Aorta (tissue), 5 donors: ENCODE measurements at regions of chr10 and their contacts with region 1.

Region 1: DNA sequence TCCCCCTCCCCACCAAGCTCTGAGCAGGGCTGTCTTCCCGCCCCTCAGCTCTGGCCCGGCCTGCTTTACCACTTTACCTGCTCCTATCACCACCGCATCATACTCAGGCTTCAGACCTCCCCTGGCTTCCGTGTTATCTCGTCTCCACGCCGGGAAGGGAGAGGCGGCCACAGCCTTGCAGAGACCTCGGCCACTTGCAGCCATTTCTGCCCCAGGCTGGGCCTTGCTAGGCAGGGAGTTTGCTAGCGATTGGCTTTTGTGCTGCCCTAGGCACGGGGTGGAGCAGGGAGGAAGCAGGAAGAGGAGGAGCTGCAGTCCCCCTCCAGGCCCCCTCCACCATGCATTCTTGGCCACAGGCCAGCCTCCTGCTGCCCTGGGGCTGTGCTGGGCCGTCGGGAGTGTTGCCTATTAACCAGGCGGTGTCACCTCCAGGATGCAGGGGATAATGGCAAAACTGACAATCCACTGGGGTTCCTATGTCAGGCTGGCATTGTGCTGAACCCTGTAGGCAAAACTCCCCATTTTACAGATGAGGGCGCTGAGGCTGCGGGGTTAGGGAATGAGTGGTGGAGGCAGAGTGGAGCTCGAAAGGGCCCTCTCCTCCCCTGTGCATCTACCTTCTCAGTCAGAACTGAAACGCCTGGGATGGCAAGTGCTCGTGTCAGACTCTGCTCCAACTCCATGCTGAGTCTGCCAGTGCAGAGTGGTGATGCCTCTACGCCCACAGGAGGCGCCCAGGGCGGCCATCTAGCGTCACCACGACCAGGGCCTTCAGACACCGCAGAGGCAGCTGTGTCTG is at the start of gene PYROXD2:
- DNase-seq: peak; percentile 96
- ATAC-seq: peak; percentile 95
- H3K4me3 ChIP-seq: peak within 1 kb of the TSS; percentile 14 to 56
- H3K27ac ChIP-seq: peak within 1 kb of the TSS in 1 of 2 donors; percentile 22
- H3K4me1 ChIP-seq: no peaks in the 10 kb centered on the region
- H3K27me3 ChIP-seq: no peaks in the 10 kb centered on the region
- total RNA-seq, gene PYROXD2: 8.7 to 17.7 TPM

Region 2: DNA sequence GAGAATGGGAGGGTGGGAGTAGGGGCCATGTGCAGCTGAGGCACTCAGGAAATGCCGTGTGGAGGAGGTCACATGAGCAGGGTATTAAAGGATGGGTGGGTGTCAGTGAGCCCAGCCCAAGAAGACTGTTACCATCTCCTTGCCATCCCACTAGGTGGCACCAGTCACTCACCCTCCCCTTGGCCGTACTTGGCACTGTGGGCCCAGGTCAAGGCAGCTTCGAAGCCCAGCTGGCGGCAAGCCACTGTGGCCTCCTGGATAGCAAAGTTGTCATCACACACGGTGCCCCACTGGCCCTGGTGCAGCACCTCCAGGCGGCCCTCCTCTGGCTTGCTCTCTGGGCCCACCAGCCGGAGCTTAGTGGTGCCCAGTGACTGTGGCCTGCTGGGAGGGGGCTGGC is 152.6 kb before region 1 on chr10:
- intact Hi-C with region 1: loop called in 1 of 2 experiments (anchors 10 kb)
- DNase-seq: no peak
- ATAC-seq: no peak
- H3K4me3 ChIP-seq: no peak overlapping the region
- H3K27ac ChIP-seq: no peak overlapping the region
- H3K4me1 ChIP-seq: no peaks in the 10 kb centered on the region
- H3K27me3 ChIP-seq: no peaks in the 10 kb centered on the region

Region 3: DNA sequence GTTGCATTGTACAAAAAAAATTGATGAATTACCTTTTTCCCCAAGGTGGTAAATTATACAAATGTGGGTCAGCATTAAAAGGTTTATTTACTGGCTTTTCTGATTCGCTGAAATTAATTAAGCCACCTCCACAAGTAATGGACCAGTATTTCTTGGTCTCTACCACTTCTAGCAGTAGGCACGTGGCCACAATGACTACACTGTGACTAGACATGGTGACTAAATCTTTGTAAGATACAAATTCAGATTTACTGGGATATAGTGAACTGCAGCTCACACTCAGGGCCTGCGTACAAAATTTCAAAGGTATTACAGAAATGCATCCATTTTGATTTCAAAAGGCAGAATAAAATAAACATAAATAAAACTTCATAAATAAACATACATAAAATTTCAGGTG is 809.6 kb after region 1 on chr10:
- intact Hi-C with region 1: no loop called
- DNase-seq: no peak
- ATAC-seq: no peak
- H3K4me3 ChIP-seq: no peak overlapping the region
- H3K27ac ChIP-seq: no peak overlapping the region
- H3K4me1 ChIP-seq: no peaks in the 10 kb centered on the region
- H3K27me3 ChIP-seq: no peaks in the 10 kb centered on the region